PC-3 (cell line): ENCODE measurements at regions of chr4 and their contacts with region 1.

Region 1: DNA sequence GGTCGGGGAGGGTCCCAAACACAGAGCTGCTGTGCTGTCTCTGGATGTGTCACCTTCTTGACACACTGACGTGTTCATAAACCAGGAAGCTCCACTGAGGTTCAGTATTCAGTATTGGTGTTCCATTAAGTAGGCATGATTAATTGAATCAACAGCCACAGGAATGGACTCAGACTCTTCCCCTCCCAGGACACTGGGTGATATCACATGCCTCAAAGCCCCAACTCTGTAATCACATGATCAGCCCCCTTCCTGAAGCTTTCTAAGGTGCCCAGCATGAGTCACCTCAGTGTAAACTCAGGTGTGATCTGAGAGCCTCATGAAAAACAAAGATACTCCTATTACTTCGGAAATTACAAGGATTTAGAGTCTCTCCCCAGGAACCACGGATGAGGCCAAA is 21.1 kb upstream of the HNRNPD start:
- DNase-seq: peak; percentile 93
- ATAC-seq: peak; percentile 89
- H3K4me3 ChIP-seq: peak overlapping the region; percentile 52
- H3K27ac ChIP-seq: peak overlapping the region; percentile 98
- H3K4me1 ChIP-seq: peaks cover 21% of the 10 kb centered on the region
- H3K27me3 ChIP-seq: no peaks in the 10 kb centered on the region
- CTCF ChIP-seq: no peak

Region 2: DNA sequence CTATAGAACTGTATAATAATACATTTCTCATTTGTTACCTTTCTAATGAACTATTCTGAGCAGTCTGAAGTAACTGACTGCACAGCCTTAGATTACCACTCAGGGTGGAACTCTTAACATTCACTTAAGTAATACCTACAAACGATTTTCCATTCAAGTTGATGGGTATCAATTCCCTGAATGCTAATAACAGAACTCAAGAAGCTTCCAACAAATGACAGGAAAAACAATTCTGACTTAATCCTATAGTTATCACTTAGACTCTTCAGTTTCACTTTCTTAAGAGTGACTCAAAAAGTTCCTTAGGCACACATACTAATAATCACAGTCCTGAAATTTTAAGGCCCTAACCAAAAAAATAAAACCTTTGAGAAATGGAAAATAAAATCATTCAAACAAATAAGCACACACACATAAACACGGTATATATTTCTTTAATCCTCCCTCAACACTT is 42.0 kb before region 1 on chr4:
- CTCF ChIA-PET with region 1: no interaction called
- POLR2A ChIA-PET with region 1: no interaction called
- intact Hi-C with region 1: no loop called
- DNase-seq: no peak
- ATAC-seq: no peak
- H3K4me3 ChIP-seq: no peak overlapping the region
- H3K27ac ChIP-seq: no peak overlapping the region
- H3K4me1 ChIP-seq: no peaks in the 10 kb centered on the region
- H3K27me3 ChIP-seq: no peaks in the 10 kb centered on the region
- CTCF ChIP-seq: no peak

Region 3: DNA sequence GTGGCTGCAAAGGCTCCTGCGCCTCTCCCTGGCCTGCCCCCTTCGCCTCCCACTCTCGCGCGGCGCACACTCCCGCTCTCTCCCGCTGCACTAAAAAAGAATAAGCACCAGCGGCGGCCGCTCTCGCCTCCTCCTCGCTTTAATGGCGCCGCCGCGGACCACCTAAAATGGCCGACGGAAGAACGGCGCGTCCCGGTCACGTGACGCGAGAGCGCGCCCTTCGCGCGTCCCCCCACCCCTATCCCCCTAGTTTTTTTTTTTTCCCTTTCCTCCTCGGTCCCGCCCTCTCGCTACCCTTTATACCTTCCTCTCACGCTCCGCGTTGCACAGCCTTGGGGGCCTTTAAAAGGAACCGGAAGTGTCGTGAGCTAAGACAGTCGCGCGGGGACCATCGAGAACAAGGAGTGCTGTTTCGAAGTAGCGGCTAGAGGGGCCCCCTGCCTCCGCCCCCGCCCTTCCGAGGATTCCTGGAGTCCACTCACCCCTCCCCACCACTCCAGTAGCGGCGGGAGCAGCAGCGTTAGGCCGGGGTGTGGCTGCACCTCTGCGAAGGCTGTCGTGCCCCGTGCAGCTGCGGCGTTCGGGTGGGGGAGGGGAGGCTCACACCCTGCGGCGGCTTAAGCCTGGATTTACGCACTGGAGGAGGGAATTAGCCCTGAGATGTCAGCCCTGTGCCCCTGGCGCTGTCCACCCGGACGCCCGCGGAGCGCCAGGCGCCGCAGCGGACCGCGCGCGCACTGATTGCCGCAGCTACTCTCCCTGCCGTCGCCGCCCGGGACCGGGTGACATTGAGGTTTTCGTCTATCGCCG is 20.9 kb before region 1 on chr4 and contains the start of gene HNRNPD:
- CTCF ChIA-PET with region 1: no interaction called
- POLR2A ChIA-PET with region 1: no interaction called
- intact Hi-C with region 1: loop called (anchors 1 kb)
- DNase-seq: peak; percentile 96
- ATAC-seq: peak; percentile 89
- H3K4me3 ChIP-seq: peak within 1 kb of the TSS; percentile 97
- H3K27ac ChIP-seq: peak within 1 kb of the TSS; percentile 87
- H3K4me1 ChIP-seq: peaks cover 19% of the 10 kb centered on the region
- H3K27me3 ChIP-seq: no peaks in the 10 kb centered on the region
- CTCF ChIP-seq: no peak
- total RNA-seq, gene HNRNPD: 86.4 and 136 TPM in 2 replicates

Region 4: DNA sequence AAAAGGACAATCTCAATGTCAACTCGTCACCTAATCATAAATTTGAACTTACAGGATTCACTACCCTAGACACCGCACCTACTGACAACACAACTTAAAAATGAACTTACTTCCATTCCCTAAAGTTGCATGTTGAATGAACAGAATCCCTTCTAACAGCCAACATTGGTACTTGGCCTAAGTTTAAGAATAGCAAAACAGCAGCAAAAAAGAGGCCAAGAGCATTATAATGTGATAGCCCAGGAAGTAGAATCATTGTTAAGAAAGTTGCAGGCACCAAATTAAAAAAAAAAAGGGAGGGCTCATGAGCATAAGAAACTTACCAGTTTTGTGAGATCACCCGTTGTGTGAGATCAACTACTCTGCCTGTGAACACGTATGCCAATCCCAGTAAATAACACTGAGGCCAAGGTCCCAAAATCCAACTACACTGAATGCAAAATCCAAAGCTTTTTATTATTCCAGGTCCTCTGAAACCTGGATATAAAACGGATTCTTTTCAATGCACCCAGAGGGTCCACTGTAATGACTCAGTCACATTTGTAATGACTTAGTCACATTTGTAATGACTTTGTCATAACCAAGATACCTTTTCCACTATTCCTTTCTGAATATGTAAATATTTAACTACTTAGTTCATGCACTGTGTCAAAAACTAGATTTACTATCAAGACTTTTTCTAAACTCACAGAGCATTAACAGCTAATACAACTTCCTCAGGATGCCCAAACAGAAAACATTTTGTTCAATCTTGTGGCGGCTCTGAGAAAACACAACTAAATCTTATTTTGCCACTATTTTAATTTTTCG is 28.5 kb after region 1 on chr4:
- CTCF ChIA-PET with region 1: interaction called, 5 read pairs
- POLR2A ChIA-PET with region 1: interaction called, 8 read pairs
- intact Hi-C with region 1: loop called (anchors 1 kb)
- DNase-seq: peak; percentile 87
- ATAC-seq: peak; percentile 80
- H3K4me3 ChIP-seq: peak overlapping the region; percentile 40
- H3K27ac ChIP-seq: peak overlapping the region; percentile 61
- H3K4me1 ChIP-seq: peaks cover 40% of the 10 kb centered on the region
- H3K27me3 ChIP-seq: no peaks in the 10 kb centered on the region
- CTCF ChIP-seq: no peak